ENCODE measurements at regions of chr11 and their contacts with region 1.

Region 1: GRCh38 chr11:9719566-9720289 is 55.9 kb downstream of the SWAP70 start:
- DNase-seq: no peak
- H3K4me3 ChIP-seq: no peak overlapping the region
- CTCF ChIP-seq: no peak

Region 2: GRCh38 chr11:9688716-9689511 is 30.8 kb before region 1 on chr11:
- in situ Hi-C with region 1: loop called (anchors 5 kb)
- DNase-seq: peak; percentile 80
- H3K4me3 ChIP-seq: peak overlapping the region; percentile 7
- CTCF ChIP-seq: no peak

Measured in astrocyte of the cerebellum (primary cell).